Breast epithelium (tissue), 4 donors: ENCODE measurements at regions of chrX and their contacts with region 1.

Region 1: GRCh38 chrX:21479695-21480270 is 105.6 kb downstream of the CNKSR2 start:
- DNase-seq: no peak
- H3K4me3 ChIP-seq: no peak overlapping the region
- H3K27ac ChIP-seq: no peak overlapping the region
- H3K4me1 ChIP-seq: no peaks in the 10 kb centered on the region
- H3K27me3 ChIP-seq: peaks cover 0 to 8% of the 10 kb centered on the region in 2 donors
- CTCF ChIP-seq: peak in 2 of 3 donors; percentile 39 to 45
- POLR2A ChIP-seq: no peak

Region 2: GRCh38 chrX:19855700-19856381 is 1623.9 kb before region 1 on chrX:
- intact Hi-C with region 1: no loop called
- DNase-seq: no peak
- H3K4me3 ChIP-seq: no peak overlapping the region
- H3K27ac ChIP-seq: no peak overlapping the region
- H3K4me1 ChIP-seq: no peaks in the 10 kb centered on the region
- H3K27me3 ChIP-seq: peaks cover 0 to 18% of the 10 kb centered on the region in 2 donors
- CTCF ChIP-seq: no peak
- POLR2A ChIP-seq: no peak

Region 3: GRCh38 chrX:20515841-20516461 is 963.8 kb before region 1 on chrX:
- intact Hi-C with region 1: loop called (anchors 5 kb)
- DNase-seq: no peak
- H3K4me3 ChIP-seq: no peak overlapping the region
- H3K27ac ChIP-seq: peak overlapping the region; percentile 12 to 33
- H3K4me1 ChIP-seq: no peaks in the 10 kb centered on the region
- H3K27me3 ChIP-seq: peaks cover 0 to 45% of the 10 kb centered on the region in 2 donors
- CTCF ChIP-seq: no peak
- POLR2A ChIP-seq: no peak

Region 4: DNA sequence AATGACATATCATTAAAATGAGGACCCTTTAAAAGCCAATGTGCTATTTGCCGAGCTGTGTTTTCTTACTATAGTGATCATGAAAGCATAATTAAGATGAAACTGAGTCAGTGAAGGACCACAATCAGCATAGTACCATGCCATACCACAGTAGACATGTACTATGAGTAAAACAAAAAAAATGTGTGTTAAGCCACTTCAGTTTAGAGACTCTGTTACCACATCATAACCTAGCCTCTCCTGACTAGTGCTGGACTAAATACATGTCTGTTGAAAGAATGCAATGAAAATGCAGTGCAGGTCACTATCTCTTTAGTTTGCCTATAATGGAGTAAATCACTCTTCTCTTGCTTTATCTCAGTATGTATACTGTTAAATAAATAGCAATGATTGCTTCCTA is 1507.7 kb after region 1 on chrX:
- intact Hi-C with region 1: loop called (anchors 10 kb)
- DNase-seq: no peak
- H3K4me3 ChIP-seq: no peak overlapping the region
- H3K27ac ChIP-seq: no peak overlapping the region
- H3K4me1 ChIP-seq: no peaks in the 10 kb centered on the region
- H3K27me3 ChIP-seq: peaks cover 0 to 21% of the 10 kb centered on the region in 2 donors
- CTCF ChIP-seq: no peak
- POLR2A ChIP-seq: no peak